Right ventricle myocardium inferior (tissue), 1 donor: ENCODE measurements at regions of chr1 and their contacts with region 1.

Region 1: DNA sequence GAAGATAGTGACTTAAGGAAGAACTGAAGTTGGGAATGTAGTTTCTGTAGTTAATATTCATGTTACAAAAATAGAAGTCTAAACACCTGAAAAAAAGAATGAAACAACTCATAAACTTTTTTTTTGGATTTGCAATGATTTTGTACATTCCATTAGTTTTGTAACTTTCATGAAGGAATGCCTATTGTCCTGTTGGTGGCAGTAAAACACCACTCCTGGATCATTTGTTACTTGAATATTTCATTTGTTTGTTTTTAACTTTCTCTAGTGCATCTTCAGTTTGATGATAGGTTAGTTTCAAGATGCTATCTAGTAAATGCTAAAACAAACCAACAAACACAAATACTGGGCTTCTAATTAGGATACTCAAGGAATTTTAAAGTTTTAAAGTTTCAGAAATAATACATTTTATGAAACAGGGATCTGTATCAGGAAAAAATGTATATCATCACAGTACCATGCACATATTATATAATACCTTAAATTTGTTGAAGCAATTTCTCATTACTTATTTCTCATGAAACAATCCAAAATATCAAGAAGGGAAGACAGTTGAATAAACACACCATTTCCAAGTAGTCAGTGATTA is 229.7 kb upstream of the CACYBP start:
- DNase-seq: no peak
- ATAC-seq: no peak

Region 2: GRCh38 chr1:174726167-174726879 is 43.7 kb before region 1 on chr1:
- intact Hi-C with region 1: no loop called
- DNase-seq: no peak
- ATAC-seq: no peak

Region 3: GRCh38 chr1:174982971-174983689 is 213.1 kb after region 1 on chr1:
- intact Hi-C with region 1: loop called (anchors 2 kb)
- DNase-seq: no peak
- ATAC-seq: no peak

Region 4: GRCh38 chr1:174999216-174999925 is 229.3 kb after region 1 on chr1:
- intact Hi-C with region 1: loop called (anchors 5 kb)
- DNase-seq: peak; percentile 98
- ATAC-seq: peak; percentile 95

Region 5: GRCh38 chr1:175129997-175130648 is 360.1 kb after region 1 on chr1:
- intact Hi-C with region 1: loop called (anchors 10 kb)
- DNase-seq: no peak
- ATAC-seq: no peak